OCI-LY7 (cell line): ENCODE measurements at regions of chr1 and their contacts with region 1.

Region 1: GRCh38 chr1:165367375-165367993 is 11.0 kb upstream of the LMX1A start:
- DNase-seq: peak; percentile 64
- H3K4me3 ChIP-seq: no peak overlapping the region
- H3K27ac ChIP-seq: no peak overlapping the region
- H3K4me1 ChIP-seq: no peaks in the 10 kb centered on the region
- CTCF ChIP-seq: peak; percentile 95

Region 2: GRCh38 chr1:165144757-165145397 is 222.6 kb before region 1 on chr1:
- CTCF ChIA-PET with region 1: no interaction called
- POLR2A ChIA-PET with region 1: no interaction called
- intact Hi-C with region 1: loop called (anchors 10 kb)
- DNase-seq: peak; percentile 42
- H3K4me3 ChIP-seq: no peak overlapping the region
- H3K27ac ChIP-seq: no peak overlapping the region
- H3K4me1 ChIP-seq: no peaks in the 10 kb centered on the region
- CTCF ChIP-seq: peak; percentile 92

Region 3: DNA sequence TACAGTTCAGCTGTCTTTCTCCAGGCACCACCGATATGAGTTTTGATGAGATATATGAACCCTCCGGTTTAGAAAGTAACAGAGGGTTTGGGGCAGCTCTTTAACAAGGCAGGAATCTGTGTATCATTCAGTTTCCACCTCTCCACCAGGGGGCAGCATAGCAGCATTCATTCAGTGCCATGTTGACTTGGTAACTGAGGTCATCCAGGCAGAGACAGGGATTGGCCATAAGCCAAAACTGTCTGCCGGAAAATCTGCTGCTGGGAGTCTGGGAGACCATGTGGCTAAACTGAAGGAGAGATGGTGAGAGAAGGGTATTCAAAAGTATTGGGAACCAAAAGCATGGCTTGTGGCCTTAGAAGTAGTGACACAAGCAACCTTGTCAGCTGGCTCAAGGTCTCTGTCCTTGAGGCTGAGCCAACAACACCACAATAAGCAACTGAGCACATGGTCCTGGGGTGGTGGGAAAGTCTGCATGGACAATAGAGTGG is 109.5 kb before region 1 on chr1:
- CTCF ChIA-PET with region 1: no interaction called
- POLR2A ChIA-PET with region 1: no interaction called
- intact Hi-C with region 1: loop called (anchors 10 kb)
- DNase-seq: peak; percentile 44
- H3K4me3 ChIP-seq: no peak overlapping the region
- H3K27ac ChIP-seq: no peak overlapping the region
- H3K4me1 ChIP-seq: no peaks in the 10 kb centered on the region
- CTCF ChIP-seq: peak; percentile 88

Region 4: DNA sequence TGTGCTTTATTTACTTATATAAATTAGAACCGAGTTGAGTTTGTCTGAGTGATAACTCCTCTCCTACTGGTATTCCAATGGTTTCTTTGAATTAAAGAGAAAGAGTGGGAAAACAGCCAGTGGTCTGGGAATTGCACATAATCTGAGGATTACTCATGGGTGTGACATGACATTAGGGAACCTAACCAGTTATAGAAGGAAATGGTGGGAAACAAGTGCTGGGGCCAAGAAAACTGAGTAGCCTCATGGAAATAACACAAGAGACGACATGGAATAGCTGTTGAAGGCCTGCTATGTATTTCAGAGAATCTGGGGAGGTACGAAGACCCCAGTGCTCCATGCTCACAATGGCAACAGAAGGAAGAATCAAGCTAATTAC is 134.5 kb after region 1 on chr1:
- CTCF ChIA-PET with region 1: no interaction called
- POLR2A ChIA-PET with region 1: no interaction called
- intact Hi-C with region 1: no loop called
- DNase-seq: no peak
- H3K4me3 ChIP-seq: no peak overlapping the region
- H3K27ac ChIP-seq: no peak overlapping the region
- H3K4me1 ChIP-seq: no peaks in the 10 kb centered on the region
- CTCF ChIP-seq: no peak

Region 5: DNA sequence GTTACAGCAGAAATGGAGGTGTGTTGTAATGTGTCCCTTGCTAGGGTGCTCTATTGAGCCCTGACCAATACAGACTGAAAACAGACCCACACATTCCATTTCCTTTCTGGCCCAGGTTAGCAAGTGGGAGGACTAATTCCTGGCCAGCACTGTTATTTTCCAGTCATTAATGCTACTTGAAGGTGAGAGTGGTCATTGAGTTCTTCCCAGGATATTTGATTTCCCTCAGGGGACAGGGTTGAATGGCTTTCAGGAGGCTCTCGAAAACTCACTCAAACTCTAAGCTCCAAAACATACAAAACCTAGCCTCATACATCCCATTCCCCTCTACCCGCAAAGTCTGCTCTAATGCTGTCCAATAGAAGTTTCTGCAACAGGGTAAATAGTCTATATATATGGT is 182.5 kb after region 1 on chr1:
- CTCF ChIA-PET with region 1: no interaction called
- POLR2A ChIA-PET with region 1: no interaction called
- intact Hi-C with region 1: loop called (anchors 1 kb)
- DNase-seq: no peak
- H3K4me3 ChIP-seq: no peak overlapping the region
- H3K27ac ChIP-seq: no peak overlapping the region
- H3K4me1 ChIP-seq: no peaks in the 10 kb centered on the region
- CTCF ChIP-seq: no peak